Common myeloid progenitor, CD34-positive (primary cell): ENCODE measurements at regions of chr5 and their contacts with region 1.

Region 1: DNA sequence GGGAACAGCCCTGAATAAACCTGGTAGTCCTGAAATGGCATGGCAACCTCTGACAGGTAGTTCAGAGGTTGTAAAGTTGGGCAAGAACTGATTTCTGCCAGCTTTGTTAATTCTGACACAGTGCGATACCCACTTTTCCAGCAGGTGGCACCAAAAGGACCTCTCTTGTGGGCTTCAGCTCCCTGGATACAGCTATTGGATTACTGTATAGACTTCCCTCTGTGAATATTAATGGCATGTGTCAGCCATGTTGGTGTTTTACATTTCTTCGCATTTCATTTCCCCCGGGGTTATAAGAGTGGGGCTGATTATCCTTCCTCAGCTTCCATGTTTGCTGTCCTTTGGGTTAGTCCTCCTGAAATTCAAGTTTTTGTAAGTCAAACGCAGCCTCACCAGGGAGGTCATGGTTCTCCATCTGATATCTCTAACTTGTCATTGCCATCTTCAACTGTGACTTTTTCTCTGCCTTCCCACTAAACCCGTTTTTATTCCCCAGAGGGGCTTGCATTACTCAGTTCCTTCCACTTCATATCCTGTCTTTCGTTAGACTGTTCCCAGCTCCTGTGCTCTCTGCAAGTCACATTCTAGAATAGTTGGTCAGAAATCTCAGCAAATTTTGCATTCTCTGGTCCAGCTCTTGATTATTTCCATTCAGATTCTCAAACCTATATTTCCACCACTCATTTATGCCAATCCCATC is 135.6 kb downstream of the LIFR start:
- DNase-seq: peak; percentile 36 to 62 (median 42)
- H3K4me3 ChIP-seq: no peak overlapping the region
- H3K27ac ChIP-seq: no peak overlapping the region
- H3K4me1 ChIP-seq: no peaks in the 10 kb centered on the region
- H3K27me3 ChIP-seq: peaks cover 0 to 71% (median 13%) of the 10 kb centered on the region in 5 experiments

Region 2: DNA sequence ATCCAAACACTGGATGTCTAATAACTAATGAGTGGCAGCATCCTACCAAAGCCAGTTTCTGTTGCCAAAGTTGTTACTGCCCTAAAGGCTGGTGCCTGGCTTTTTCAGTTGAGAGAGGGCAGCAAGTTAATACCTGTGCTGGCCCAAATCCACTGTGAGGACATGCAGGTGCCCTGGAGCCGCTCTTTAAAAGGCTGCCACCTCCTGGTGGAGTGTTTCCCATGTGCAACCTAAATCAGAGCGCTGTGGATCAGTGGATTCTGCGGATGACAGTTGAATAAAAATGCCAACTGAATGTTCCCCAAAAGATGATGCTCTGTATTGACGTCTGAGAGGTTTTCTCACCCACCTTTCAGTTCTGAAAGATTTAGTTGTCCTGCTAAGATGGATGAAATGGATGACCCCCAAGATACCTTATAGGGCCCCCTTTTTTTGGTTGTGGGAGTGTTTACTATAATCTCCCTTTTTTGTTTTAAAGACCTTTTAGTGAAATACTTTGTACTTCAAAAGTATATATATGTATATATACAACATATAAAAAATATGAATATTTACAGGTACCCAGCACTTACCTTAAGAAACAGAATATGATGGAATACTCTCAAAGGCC is 16.1 kb before region 1 on chr5:
- CTCF ChIA-PET with region 1: interaction called, 12 read pairs
- POLR2A ChIA-PET with region 1: no interaction called
- DNase-seq: peak; percentile 7 to 19 (median 15)
- H3K4me3 ChIP-seq: no peak overlapping the region
- H3K27ac ChIP-seq: no peak overlapping the region
- H3K4me1 ChIP-seq: no peaks in the 10 kb centered on the region
- H3K27me3 ChIP-seq: peaks cover 1 to 72% (median 8%) of the 10 kb centered on the region in 5 experiments

Region 3: DNA sequence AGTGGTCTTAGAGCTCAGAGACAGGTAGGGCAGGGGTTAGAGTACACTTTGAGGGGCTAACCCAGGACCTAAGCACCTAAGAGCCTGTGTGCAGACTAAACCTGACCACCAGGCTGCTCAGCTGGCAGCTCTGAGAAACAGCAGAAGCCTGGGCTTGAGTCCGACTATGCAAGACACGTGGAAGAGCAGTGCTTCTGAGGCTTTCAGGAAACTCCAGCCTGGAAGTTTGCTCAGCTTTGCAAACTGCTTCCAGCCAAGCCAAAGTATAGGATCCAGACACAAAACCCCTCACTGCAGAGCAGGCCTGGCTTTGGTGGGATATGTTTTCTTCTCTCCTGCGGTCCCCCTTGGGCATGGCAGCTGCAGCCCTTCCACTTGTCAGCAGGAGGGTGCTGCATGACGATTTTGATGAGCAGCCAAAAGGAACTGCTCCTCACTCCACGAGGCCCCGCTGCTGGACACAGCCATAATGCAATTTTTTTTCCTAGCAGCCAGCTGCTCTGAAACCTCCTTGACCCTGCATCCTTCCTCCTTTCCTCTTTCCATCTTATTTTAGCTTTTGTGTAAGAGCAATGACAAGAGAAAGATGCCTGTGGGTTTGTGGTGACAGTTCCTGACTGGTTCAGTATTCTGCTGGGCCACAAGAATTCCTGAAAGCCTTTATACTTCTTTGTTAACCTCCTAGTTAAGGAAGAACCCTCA is 12.5 kb after region 1 on chr5:
- CTCF ChIA-PET with region 1: interaction called, 10 read pairs
- POLR2A ChIA-PET with region 1: interaction called, 3 read pairs
- DNase-seq: no peak
- H3K4me3 ChIP-seq: no peak overlapping the region
- H3K27ac ChIP-seq: no peak overlapping the region
- H3K4me1 ChIP-seq: no peaks in the 10 kb centered on the region
- H3K27me3 ChIP-seq: peaks cover 2 to 89% (median 25%) of the 10 kb centered on the region in 5 experiments

Region 4: GRCh38 chr5:38809388-38810359 is 388.8 kb after region 1 on chr5:
- CTCF ChIA-PET with region 1: interaction called, 74 read pairs
- POLR2A ChIA-PET with region 1: no interaction called
- DNase-seq: peak; percentile 73 to 86 (median 82)
- H3K4me3 ChIP-seq: no peak overlapping the region
- H3K27ac ChIP-seq: no peak overlapping the region
- H3K4me1 ChIP-seq: no peaks in the 10 kb centered on the region
- H3K27me3 ChIP-seq: peaks cover 3 to 63% (median 18%) of the 10 kb centered on the region in 5 experiments